ENCODE measurements at regions of chr20 and their contacts with region 1.

Region 1: DNA sequence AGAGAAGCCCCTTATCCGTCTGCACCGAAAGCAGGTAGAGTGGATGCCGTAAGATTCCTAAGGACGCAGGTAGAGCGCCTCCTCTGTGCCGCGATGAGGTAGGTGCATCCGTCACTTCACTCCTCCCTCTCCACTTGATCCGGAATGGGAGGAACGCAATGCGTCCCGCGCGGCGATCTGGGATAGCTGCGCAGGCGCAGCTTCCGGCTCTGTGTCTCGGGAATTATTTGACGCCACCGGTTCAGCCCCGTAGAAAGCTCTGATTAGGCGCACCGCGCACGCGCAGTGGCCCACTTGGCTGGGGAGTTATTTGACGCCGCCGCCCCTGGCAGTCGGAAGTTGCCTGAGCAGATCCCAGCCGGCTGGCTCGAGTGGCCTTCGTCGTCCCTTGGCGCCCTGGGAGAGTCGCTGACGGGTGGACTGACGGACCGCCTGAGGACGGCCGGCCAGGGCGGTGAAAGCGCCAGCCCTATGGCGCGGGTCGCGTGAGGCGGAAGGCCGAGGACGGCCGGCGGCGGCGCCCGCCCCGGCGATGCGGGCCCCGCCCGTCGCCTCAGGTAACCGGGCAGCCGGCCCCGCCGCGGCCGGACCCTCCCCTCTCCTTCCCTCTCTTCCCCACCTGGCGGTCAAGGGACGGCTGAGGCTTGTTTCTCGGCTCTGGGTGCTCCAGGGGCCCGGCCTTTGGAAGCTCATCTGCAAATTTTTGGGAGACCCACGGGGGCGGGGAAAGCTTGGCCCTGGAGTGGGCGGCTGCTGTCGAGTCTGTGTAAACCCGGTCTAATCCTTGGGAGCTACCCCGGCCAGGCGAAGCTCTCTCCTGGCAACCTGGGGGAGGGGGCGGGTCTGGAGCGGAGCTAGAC is at the start of gene RALGAPB:
- DNase-seq: peak; percentile 96
- H3K4me3 ChIP-seq: peak within 1 kb of the TSS; percentile 79 to 89
- H3K27ac ChIP-seq: peak within 1 kb of the TSS; percentile 65 to 86; a peak in 3 of 4 replicates
- H3K4me1 ChIP-seq: peaks cover 0 to 17% of the 10 kb centered on the region in 2 experiments; a peak in 2 of 4 replicates
- H3K27me3 ChIP-seq: no peaks in the 10 kb centered on the region
- CTCF ChIP-seq: peak; percentile 54
- EP300 ChIP-seq: 0 out of 4 replicates have a peak, but pooled peaks of 1 of the 2 experiments have one; percentile 9
- RAD21 ChIP-seq: peak; percentile 47
- polyA plus RNA-seq, gene RALGAPB: 10.8 and 14.7 TPM in 2 replicates

Region 2: DNA sequence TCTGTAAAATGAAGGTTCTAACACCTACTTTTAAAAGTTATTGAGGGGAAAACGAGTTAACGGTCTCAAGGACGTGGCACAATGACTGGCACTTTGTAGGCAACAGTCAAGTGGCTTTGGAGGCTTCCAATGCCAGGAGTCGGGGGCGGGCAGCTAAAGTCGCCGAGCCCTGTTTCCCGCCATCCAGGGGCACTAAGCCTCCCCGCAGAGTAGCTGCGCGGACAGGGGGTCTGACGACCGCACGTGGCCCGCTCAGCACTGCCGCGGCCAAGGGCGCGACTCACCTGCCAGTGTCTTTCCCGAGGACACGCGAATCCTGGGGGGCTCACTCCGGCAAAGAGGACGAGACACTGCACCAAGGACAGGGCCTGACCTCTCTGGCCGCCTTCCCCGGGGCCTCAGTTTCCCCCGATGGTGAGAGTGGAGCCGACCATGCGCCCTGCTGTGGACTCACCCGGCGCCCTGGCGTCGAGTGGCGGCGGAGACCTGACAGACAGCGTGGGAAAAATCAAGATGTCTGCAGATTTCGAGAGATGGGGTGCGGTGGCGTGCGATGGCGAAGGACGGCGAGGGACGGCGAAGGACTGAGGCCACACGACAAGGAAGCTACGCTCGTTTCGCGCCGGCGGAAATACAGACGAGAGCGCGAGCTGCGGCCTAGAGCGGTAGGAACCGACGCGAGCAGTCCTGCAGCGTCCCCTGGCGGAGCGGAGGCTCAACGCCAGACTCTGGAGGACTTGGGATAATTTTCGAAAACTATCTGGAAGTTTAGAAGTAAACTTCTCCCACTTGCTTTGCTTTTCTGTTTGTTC is 37.8 kb before region 1 on chr20 and contains the start of gene SNHG17:
- CTCF ChIA-PET with region 1: interaction called, 32 read pairs
- POLR2A ChIA-PET with region 1: interaction called, 21 read pairs
- DNase-seq: peak; percentile 88
- H3K4me3 ChIP-seq: peak within 1 kb of the TSS; percentile 84 to 91
- H3K27ac ChIP-seq: peak within 1 kb of the TSS; percentile 84
- H3K4me1 ChIP-seq: peaks cover 7 to 20% of the 10 kb centered on the region in 2 experiments; a peak in 3 of 4 replicates
- H3K27me3 ChIP-seq: no peaks in the 10 kb centered on the region
- CTCF ChIP-seq: peak; percentile 99
- EP300 ChIP-seq: peak in 1 of 2 experiments; percentile 54; a peak in 1 of 4 replicates
- RAD21 ChIP-seq: peak; percentile 37; the same call in 1 of the 2 replicates
- polyA plus RNA-seq, gene SNHG17: 34.9 and 40.3 TPM in 2 replicates

Region 3: GRCh38 chr20:38446441-38447209 is 26.1 kb before region 1 on chr20:
- CTCF ChIA-PET with region 1: interaction called, 46 read pairs
- POLR2A ChIA-PET with region 1: interaction called, 22 read pairs
- DNase-seq: peak; percentile 94
- H3K4me3 ChIP-seq: peak overlapping the region; percentile 87 to 88
- H3K27ac ChIP-seq: peak overlapping the region; percentile 68 to 79
- H3K4me1 ChIP-seq: peaks cover 10 to 13% of the 10 kb centered on the region in 2 experiments; a peak in 1 of 4 replicates
- H3K27me3 ChIP-seq: no peaks in the 10 kb centered on the region
- CTCF ChIP-seq: peak; percentile 90
- EP300 ChIP-seq: peak in 1 of 2 experiments; percentile 34; a peak in 1 of 4 replicates
- RAD21 ChIP-seq: peak; percentile 53

Region 4: DNA sequence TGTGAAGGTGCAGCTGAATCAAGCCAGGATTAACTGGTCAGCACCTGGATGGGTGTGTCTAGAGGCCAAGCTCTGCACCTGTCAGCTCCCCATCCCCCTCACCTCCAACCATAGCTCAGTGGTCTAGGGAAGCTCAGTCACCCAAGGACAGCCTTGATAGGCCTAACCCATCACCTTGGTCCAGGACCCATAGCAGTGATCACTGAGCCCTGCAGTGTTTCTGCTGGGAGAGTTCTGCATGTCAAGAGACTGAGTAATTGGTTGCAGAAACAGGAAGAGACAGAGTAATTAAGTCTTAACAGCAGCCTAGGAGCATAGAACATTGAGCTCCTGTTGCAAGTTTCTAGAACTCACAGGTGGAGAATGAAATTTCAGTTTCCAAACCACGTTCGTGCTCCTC is 18.8 kb before region 1 on chr20:
- CTCF ChIA-PET with region 1: interaction called, 12 read pairs
- POLR2A ChIA-PET with region 1: no interaction called
- DNase-seq: no peak
- H3K4me3 ChIP-seq: no peak overlapping the region
- H3K27ac ChIP-seq: no peak overlapping the region
- H3K4me1 ChIP-seq: peaks cover 0 to 8% of the 10 kb centered on the region in 2 experiments; a peak in 1 of 4 replicates
- H3K27me3 ChIP-seq: no peaks in the 10 kb centered on the region
- CTCF ChIP-seq: no peak
- EP300 ChIP-seq: no peak
- RAD21 ChIP-seq: no peak

Region 5: DNA sequence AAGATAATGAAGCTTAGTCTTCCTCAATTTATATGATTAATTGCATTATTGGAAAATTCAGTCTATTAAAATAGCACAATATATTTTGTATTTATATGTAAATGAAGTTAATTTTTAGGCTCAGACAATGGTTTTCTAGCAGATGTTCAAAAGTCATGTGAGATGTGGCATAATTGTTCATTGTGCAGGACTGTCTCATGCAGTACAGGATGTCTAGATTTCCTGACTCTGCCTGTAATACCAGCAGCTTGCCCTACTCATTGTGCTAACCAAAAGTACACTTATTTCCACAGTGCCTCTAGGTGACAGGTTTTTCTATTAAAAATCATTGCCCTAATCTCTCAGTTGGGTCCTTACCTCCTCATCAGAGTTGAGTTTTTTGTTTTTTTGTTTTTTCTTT is 12.3 kb after region 1 on chr20:
- CTCF ChIA-PET with region 1: interaction called, 14 read pairs
- POLR2A ChIA-PET with region 1: interaction called, 3 read pairs
- DNase-seq: no peak
- H3K4me3 ChIP-seq: no peak overlapping the region
- H3K27ac ChIP-seq: no peak overlapping the region
- H3K4me1 ChIP-seq: no peaks in the 10 kb centered on the region; a peak in 2 of 4 replicates
- H3K27me3 ChIP-seq: no peaks in the 10 kb centered on the region
- CTCF ChIP-seq: no peak
- EP300 ChIP-seq: no peak
- RAD21 ChIP-seq: no peak

Region 6: DNA sequence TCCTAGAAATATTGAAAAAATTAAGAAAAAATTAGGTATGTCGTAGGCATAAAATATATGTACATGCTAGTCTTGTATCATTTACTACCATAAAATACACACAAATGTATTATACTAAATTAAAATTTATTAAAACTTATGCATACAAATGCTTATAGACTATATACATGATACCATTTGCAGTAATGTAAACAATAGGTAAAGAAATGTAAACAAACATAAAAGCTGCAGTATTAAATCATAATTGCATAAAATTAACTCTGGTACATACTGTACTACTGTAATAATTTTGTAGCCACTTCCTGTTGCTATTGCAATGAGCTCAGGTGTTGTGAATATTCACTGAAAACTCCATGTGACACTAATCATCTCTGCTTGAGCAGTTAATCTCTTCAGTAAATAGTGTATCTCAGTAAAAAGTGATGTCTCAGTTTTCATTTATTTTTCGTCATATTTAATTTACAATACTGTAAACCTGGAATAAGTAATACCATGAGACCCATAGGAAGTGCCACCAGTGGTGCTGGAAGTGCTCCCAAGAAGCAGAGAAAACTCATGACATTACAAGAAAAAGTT is 29.2 kb after region 1 on chr20:
- CTCF ChIA-PET with region 1: no interaction called
- POLR2A ChIA-PET with region 1: no interaction called
- DNase-seq: no peak
- H3K4me3 ChIP-seq: no peak overlapping the region
- H3K27ac ChIP-seq: no peak overlapping the region
- H3K4me1 ChIP-seq: no peaks in the 10 kb centered on the region
- H3K27me3 ChIP-seq: no peaks in the 10 kb centered on the region
- CTCF ChIP-seq: no peak
- EP300 ChIP-seq: no peak
- RAD21 ChIP-seq: no peak